Gastrocnemius medialis (tissue), 4 donors: ENCODE measurements at regions of chr13 and their contacts with region 1.

Region 1: GRCh38 chr13:78102121-78102677 is 183.6 kb upstream of the EDNRB start:
- DNase-seq: peak; percentile 11 to 62
- ATAC-seq: peak; percentile 85 to 86
- H3K4me3 ChIP-seq: no peak overlapping the region
- H3K27ac ChIP-seq: peak overlapping the region in 2 of 4 donors; percentile 22 to 29
- H3K4me1 ChIP-seq: no peaks in the 10 kb centered on the region
- H3K27me3 ChIP-seq: no peaks in the 10 kb centered on the region
- CTCF ChIP-seq: no peak
- POLR2A ChIP-seq: no peak

Region 2: DNA sequence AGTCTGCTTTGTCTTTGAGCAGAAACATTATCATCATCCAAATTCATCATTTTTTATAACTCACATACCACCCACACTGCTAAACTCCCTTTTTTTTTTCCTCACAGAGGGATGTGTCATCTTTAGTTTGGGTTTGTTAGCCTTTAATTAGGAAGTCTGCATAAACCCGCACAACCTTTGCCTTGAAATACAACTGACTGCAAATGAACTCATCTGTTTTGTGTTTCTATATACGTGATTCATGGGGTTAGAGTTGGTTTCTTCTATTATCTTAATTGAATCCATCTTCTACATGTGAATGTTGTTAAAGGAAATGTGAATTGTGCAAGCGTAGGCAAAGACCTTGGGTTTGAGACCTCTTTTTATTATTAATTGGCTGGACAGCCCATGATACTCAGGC is 302.0 kb before region 1 on chr13:
- in situ Hi-C with region 1: no loop called
- intact Hi-C with region 1: no loop called
- DNase-seq: no peak
- ATAC-seq: no peak
- H3K4me3 ChIP-seq: no peak overlapping the region
- H3K27ac ChIP-seq: no peak overlapping the region
- H3K4me1 ChIP-seq: no peaks in the 10 kb centered on the region
- H3K27me3 ChIP-seq: no peaks in the 10 kb centered on the region
- CTCF ChIP-seq: no peak
- POLR2A ChIP-seq: no peak

Region 3: DNA sequence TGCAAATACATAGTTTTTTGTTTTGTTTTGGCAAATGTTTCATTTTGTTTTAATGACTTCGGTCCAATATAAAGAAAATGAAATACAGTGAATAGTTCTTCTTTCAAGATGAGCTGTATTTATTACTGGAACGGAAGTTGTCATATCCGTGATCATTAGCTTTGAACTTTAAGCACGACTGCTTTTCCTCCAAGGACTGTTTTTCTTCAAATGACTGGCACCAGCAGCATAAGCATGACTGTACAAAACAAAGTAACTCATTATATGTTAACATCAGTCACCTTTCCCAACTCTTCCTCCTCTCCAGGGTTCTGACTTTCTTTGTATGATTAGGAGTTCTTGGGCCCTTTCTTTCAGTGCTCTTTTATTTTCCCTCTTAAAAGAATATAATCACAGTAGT is 204.1 kb before region 1 on chr13:
- in situ Hi-C with region 1: no loop called
- intact Hi-C with region 1: loop called (anchors 10 kb)
- DNase-seq: no peak
- ATAC-seq: peak in 1 of 2 donors; percentile 55
- H3K4me3 ChIP-seq: no peak overlapping the region
- H3K27ac ChIP-seq: peak overlapping the region; percentile 52 to 73 (median 68)
- H3K4me1 ChIP-seq: no peaks in the 10 kb centered on the region
- H3K27me3 ChIP-seq: no peaks in the 10 kb centered on the region
- CTCF ChIP-seq: no peak
- POLR2A ChIP-seq: no peak